Mucosa of descending colon (tissue), 3 donors: ENCODE measurements at regions of chr13 and their contacts with region 1.

Region 1: DNA sequence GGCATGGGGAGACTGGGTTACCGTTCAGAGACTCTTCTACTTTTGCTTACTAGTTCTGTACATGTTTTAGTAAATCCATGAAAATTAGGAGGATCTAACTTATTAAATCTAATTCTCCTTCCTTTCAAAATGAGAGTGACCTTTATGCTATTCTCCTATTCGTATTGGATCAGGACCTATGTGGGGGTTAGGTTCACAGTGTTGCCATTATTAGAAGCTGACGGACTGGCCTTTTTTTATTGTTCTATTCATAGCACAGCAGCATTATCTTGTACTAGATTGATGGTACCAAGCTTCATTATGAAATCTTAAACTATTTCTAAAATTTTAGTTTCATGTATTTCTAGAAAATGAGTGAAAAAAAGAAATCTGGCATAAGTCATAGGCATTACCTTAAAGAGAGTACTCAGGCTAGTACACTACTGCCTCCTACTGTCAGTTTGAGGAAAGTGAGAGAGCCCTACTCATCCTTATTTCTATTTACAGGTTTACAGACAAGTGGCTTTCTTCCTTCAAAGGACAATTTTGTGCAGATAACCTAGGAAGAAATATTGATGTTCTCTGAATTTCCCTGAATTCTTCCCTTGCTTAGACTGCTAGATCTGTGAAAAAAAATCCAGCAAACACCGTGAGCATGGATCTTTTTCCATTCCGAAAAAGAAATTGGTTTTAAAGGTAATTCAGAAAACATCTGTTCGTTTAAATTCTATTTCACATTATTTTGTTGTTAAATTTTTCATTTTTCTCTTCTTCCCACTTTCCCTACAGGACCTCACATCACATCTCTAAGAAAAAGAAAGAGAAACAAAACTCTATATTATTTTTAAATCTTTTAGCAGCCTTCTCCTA is 485.5 kb downstream of the DIAPH3 start:
- DNase-seq: peak in 1 of 3 donors; percentile 38
- ATAC-seq: peak; percentile 67
- H3K4me3 ChIP-seq: no peak overlapping the region
- H3K4me1 ChIP-seq: no peaks in the 10 kb centered on the region
- CTCF ChIP-seq: peak; percentile 42

Region 2: GRCh38 chr13:59790626-59791025 is 112.4 kb after region 1 on chr13:
- intact Hi-C with region 1: no loop called
- DNase-seq: no peak
- ATAC-seq: no peak
- H3K4me3 ChIP-seq: no peak overlapping the region
- H3K4me1 ChIP-seq: no peaks in the 10 kb centered on the region
- CTCF ChIP-seq: no peak

Region 3: DNA sequence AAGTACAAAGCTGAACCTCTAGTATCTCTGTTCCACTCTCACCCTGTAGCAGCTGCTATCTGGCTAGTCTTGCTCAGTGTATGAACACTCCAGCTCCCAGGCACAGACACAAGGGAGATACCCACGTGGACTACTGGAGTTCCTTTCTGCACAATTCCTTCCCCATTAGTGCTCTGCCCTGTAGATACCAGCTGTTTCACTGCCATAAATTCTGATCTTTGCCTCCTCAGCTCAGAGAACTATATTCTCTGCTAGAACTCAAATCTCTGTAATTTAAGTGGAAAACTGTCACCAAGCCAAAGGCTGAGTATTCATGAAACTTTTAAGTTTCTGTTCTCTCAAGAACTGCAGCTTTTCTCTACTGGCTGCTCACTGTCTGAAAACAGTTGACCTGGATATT is 211.9 kb after region 1 on chr13:
- intact Hi-C with region 1: no loop called
- DNase-seq: peak in 1 of 3 donors; percentile 2
- ATAC-seq: peak; percentile 78
- H3K4me3 ChIP-seq: no peak overlapping the region
- H3K4me1 ChIP-seq: no peaks in the 10 kb centered on the region
- CTCF ChIP-seq: no peak

Region 4: GRCh38 chr13:59901191-59901590 is 223.0 kb after region 1 on chr13:
- intact Hi-C with region 1: loop called in 1 of 2 experiments (anchors 5 kb)
- DNase-seq: no peak
- ATAC-seq: no peak
- H3K4me3 ChIP-seq: no peak overlapping the region
- H3K4me1 ChIP-seq: no peaks in the 10 kb centered on the region
- CTCF ChIP-seq: no peak